Esophagus muscularis mucosa (tissue), 4 donors: ENCODE measurements at regions of chr3 and their contacts with region 1.

Region 1: GRCh38 chr3:194682694-194683310 is 2.9 kb upstream of the FAM43A start:
- DNase-seq: no peak
- H3K4me3 ChIP-seq: no peak overlapping the region
- H3K27ac ChIP-seq: peak overlapping the region in 3 of 4 donors; percentile 10 to 24 (median 11)
- H3K4me1 ChIP-seq: peaks cover 17 to 37% (median 32%) of the 10 kb centered on the region in 4 donors
- H3K27me3 ChIP-seq: no peaks in the 10 kb centered on the region
- CTCF ChIP-seq: peak; percentile 80 to 96 (median 92)
- EP300 ChIP-seq: no peak
- POLR2A ChIP-seq: no peak

Region 2: GRCh38 chr3:193970773-193971206 is 712.0 kb before region 1 on chr3:
- intact Hi-C with region 1: no loop called
- DNase-seq: no peak
- H3K4me3 ChIP-seq: no peak overlapping the region
- H3K27ac ChIP-seq: no peak overlapping the region
- H3K4me1 ChIP-seq: peaks cover 8 to 32% (median 24%) of the 10 kb centered on the region in 4 donors
- H3K27me3 ChIP-seq: no peaks in the 10 kb centered on the region
- CTCF ChIP-seq: no peak
- EP300 ChIP-seq: no peak
- POLR2A ChIP-seq: no peak

Region 3: DNA sequence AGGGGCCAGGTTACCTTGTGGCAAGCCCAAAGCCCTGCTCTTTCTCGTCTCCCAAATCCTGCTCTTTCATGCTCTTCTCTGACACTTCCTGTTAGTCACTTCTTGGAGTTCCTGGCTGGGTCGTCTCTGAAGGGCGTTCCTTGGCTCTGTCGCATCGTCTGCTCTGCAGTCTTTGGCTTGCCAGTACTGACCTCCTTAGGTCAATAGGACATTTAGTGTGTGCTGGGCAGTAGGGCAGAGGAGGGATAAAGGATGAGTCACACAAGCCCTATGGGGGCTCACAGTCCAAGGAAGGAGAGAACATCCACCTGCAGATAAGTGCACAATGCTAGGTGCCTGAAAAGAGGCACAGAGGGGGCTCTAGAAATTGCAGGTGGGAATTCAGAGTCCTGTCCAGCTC is 90.4 kb after region 1 on chr3:
- intact Hi-C with region 1: loop called (anchors 5 kb)
- DNase-seq: no peak
- H3K4me3 ChIP-seq: no peak overlapping the region
- H3K27ac ChIP-seq: peak overlapping the region; percentile 38 to 71 (median 50)
- H3K4me1 ChIP-seq: peaks cover 25 to 44% (median 39%) of the 10 kb centered on the region in 4 donors
- H3K27me3 ChIP-seq: no peaks in the 10 kb centered on the region
- CTCF ChIP-seq: no peak
- EP300 ChIP-seq: no peak
- POLR2A ChIP-seq: no peak

Region 4: GRCh38 chr3:194871143-194871863 is 188.5 kb after region 1 on chr3:
- intact Hi-C with region 1: loop called (anchors 5 kb)
- DNase-seq: no peak
- H3K4me3 ChIP-seq: no peak overlapping the region
- H3K27ac ChIP-seq: peak overlapping the region; percentile 46 to 66 (median 59)
- H3K4me1 ChIP-seq: peaks cover 26 to 34% (median 30%) of the 10 kb centered on the region in 4 donors
- H3K27me3 ChIP-seq: no peaks in the 10 kb centered on the region
- CTCF ChIP-seq: no peak
- EP300 ChIP-seq: no peak
- POLR2A ChIP-seq: no peak

Region 5: DNA sequence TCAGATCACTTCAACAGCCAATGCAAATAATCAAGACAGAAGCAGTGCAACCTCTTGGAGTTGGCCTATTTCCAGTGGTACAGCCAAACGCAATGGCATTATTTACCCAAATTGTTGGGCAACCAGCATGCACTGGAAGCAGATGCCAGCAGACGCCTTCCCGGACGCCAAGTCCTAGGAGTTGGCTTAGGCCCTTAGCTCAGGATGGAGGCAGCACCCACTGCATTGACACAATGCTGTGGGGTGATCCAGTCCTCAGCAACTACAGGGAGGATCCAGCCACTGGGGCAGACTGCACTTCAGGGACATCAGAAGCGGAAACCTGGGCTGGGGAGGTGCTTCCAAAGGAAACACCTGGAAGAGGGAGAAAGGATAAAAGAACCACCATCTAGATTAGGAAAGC is 293.2 kb after region 1 on chr3:
- intact Hi-C with region 1: no loop called
- DNase-seq: peak; percentile 83
- H3K4me3 ChIP-seq: no peak overlapping the region
- H3K27ac ChIP-seq: no peak overlapping the region
- H3K4me1 ChIP-seq: no peaks in the 10 kb centered on the region
- H3K27me3 ChIP-seq: no peaks in the 10 kb centered on the region
- CTCF ChIP-seq: no peak
- EP300 ChIP-seq: no peak
- POLR2A ChIP-seq: no peak

Region 6: GRCh38 chr3:195106418-195106906 is 423.7 kb after region 1 on chr3:
- intact Hi-C with region 1: loop called (anchors 2 kb)
- DNase-seq: peak; percentile 93
- H3K4me3 ChIP-seq: peak overlapping the region; percentile 25 to 46 (median 30)
- H3K27ac ChIP-seq: no peak overlapping the region
- H3K4me1 ChIP-seq: peaks cover 16 to 24% (median 22%) of the 10 kb centered on the region in 4 donors
- H3K27me3 ChIP-seq: no peaks in the 10 kb centered on the region
- CTCF ChIP-seq: peak in 2 of 3 experiments; percentile 99 to 100
- EP300 ChIP-seq: no peak
- POLR2A ChIP-seq: no peak

Region 7: GRCh38 chr3:195259475-195260279 is 576.9 kb after region 1 on chr3:
- intact Hi-C with region 1: loop called (anchors 2 kb)
- DNase-seq: peak; percentile 98
- H3K4me3 ChIP-seq: peak overlapping the region; percentile 73 to 91 (median 75)
- H3K27ac ChIP-seq: peak overlapping the region; percentile 91 to 96 (median 96)
- H3K4me1 ChIP-seq: peaks cover 32 to 39% (median 35%) of the 10 kb centered on the region in 4 donors
- H3K27me3 ChIP-seq: no peaks in the 10 kb centered on the region
- CTCF ChIP-seq: peak; percentile 77 to 99 (median 94)
- EP300 ChIP-seq: no peak
- POLR2A ChIP-seq: no peak

Region 8: DNA sequence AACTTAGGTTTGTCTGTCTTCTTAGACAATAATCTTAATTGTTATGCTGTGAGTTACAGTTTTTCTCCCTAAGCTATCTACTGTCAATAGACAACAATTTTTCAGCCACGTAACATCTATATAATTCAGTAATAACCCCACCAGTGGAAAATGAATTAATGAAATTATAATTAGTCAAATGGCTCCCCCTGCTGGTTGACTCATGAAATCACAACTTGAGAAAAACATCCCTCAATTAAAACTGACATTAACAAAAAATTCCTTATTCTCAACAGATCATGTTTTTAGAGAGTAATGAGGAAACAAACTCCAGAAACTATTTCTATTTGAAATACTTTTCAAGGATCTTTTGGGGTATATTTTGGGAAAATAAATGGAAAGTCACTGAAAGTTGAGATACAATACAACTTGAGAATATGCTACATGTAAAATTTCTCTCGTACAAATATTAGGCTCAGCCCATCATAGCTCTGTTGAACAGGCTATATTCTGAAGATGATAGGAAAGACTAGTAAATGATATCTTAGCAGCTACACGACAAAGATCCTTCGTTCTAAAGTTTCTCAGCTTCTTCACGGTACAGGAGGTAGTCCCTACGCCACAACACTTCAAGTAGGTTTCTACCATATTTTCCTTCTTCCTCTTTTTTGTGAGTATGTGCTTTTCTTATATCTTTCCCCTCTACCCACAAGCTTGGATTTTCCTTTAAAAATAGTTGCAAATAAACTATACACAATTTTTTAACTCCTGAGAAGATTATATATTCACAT is 839.6 kb after region 1 on chr3:
- intact Hi-C with region 1: loop called (anchors 10 kb)
- DNase-seq: no peak
- H3K4me3 ChIP-seq: no peak overlapping the region
- H3K27ac ChIP-seq: no peak overlapping the region
- H3K4me1 ChIP-seq: peaks cover 0 to 3% (median 0%) of the 10 kb centered on the region in 4 donors
- H3K27me3 ChIP-seq: no peaks in the 10 kb centered on the region
- CTCF ChIP-seq: peak; percentile 69 to 84 (median 76)
- EP300 ChIP-seq: no peak
- POLR2A ChIP-seq: no peak